ENCODE measurements at regions of chr2 and their contacts with region 1.

Region 1: DNA sequence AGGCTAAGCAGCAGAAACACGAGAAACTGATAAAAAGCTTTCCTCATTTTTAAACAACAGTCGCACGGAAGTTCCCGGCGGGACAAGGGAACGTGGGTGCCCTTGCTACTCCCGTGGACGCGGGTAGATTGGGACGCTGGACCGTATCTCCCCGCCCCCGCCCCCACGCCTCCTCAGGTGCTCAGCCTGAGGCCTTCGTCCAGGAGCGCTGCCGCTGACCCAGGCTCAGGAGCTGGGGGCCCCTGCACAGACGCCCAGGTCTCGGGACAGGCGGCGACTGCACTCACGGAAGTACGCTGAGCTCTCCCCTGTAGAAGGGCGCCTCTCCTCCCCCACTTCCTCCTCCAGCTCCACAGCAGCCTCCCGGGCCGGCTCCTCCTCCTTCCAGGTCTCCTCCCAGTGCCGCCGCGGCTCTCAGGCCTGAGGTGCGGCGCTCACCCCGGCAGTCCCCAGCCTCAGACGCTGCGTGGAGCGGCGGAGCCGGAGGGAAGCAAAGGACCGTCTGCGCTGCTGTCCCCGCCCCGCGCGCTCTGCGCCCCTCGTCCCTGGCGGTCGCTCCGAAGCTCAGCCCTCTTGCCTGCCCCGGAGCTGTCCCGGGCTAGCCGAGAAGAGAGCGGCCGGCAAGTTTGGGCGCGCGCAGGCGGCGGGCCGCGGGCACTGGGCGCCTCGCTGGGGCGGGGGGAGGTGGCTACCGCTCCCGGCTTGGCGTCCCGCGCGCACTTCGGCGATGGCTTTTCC is at the start of gene ITGAV:
- DNase-seq: peak; percentile 83

Region 2: GRCh38 chr2:186575302-186575701 is 14.5 kb before region 1 on chr2:
- CTCF ChIA-PET with region 1: no interaction called
- POLR2A ChIA-PET with region 1: interaction called, 24 read pairs
- DNase-seq: peak; percentile 66

Region 3: DNA sequence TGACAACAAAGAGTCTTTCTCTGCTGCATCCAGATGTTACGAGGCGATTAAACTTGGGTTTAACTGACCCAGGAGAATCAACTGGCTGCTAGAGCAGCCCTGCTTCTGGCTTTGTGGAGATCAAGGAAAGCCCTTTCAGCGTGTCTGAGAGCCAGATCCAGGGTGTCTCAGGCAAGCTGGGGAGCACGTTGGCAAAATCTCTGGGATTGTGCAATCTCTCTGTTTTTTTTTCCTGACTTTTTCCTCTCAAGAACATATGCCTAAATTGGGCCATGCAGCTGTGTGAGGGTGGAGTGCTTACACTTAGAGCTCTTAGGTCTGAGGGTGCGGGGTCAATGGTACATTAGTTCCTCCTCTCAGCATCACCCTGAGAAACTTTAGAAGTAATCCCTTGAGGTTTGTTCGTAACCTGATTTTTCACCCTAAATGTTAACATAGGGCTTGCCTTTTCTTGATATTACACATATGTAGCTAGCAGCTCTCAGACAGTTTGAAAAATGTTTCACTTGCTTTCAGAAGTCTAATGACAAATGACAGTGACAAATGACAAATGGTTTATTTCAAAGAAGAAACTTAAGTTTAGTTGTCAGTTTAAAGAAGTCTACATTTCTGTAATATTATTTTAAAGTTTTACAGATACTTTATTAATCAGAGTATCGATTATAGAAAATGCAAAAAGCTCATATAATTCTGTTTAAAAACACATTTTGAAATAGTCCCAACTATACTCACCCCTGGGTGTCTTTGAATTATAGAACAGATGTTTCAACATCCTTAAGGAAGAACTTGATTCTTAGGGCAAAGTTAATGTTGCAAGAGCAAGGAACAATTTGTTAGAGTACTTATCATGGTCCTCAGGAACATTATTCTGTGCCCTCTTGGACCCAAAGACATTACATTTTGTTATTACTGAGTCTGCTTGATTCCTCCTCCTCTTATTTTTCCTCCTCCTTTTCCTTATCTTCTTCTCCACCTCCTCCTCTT is 297.6 kb after region 1 on chr2:
- CTCF ChIA-PET with region 1: no interaction called
- POLR2A ChIA-PET with region 1: no interaction called
- DNase-seq: no peak